Mammary epithelial cell (primary cell): ENCODE measurements at regions of chr9 and their contacts with region 1.

Region 1: GRCh38 chr9:763692-764524 is 77.6 kb upstream of the DMRT1 start:
- DNase-seq: peak; percentile 74
- H3K4me3 ChIP-seq: peak overlapping the region in 1 of 3 experiments; percentile 26
- H3K27ac ChIP-seq: no peak overlapping the region
- H3K4me1 ChIP-seq: peaks cover 7% of the 10 kb centered on the region
- H3K27me3 ChIP-seq: peaks cover 2% of the 10 kb centered on the region
- CTCF ChIP-seq: peak; percentile 98 to 99

Region 2: GRCh38 chr9:347667-348292 is 416.1 kb before region 1 on chr9:
- CTCF ChIA-PET with region 1: no interaction called
- dilution Hi-C with region 1: no loop called
- in situ Hi-C with region 1: no loop called
- intact Hi-C with region 1: loop called (anchors 1 kb)
- DNase-seq: peak; percentile 51
- H3K4me3 ChIP-seq: no peak overlapping the region
- H3K27ac ChIP-seq: no peak overlapping the region
- H3K4me1 ChIP-seq: peaks cover 7% of the 10 kb centered on the region
- H3K27me3 ChIP-seq: no peaks in the 10 kb centered on the region
- CTCF ChIP-seq: peak; percentile 87 to 98

Region 3: GRCh38 chr9:406886-407654 is 356.8 kb before region 1 on chr9:
- CTCF ChIA-PET with region 1: no interaction called
- dilution Hi-C with region 1: no loop called
- in situ Hi-C with region 1: no loop called
- intact Hi-C with region 1: loop called (anchors 5 kb)
- DNase-seq: no peak
- H3K4me3 ChIP-seq: no peak overlapping the region
- H3K27ac ChIP-seq: no peak overlapping the region
- H3K4me1 ChIP-seq: no peaks in the 10 kb centered on the region
- H3K27me3 ChIP-seq: no peaks in the 10 kb centered on the region
- CTCF ChIP-seq: peak in 1 of 2 donors; percentile 53

Region 4: GRCh38 chr9:650362-650761 is 113.5 kb before region 1 on chr9:
- CTCF ChIA-PET with region 1: no interaction called
- dilution Hi-C with region 1: no loop called
- in situ Hi-C with region 1: no loop called
- intact Hi-C with region 1: no loop called
- DNase-seq: no peak
- H3K4me3 ChIP-seq: no peak overlapping the region
- H3K27ac ChIP-seq: peak overlapping the region; percentile 6
- H3K4me1 ChIP-seq: peaks cover 26% of the 10 kb centered on the region
- H3K27me3 ChIP-seq: no peaks in the 10 kb centered on the region
- CTCF ChIP-seq: no peak

Region 5: DNA sequence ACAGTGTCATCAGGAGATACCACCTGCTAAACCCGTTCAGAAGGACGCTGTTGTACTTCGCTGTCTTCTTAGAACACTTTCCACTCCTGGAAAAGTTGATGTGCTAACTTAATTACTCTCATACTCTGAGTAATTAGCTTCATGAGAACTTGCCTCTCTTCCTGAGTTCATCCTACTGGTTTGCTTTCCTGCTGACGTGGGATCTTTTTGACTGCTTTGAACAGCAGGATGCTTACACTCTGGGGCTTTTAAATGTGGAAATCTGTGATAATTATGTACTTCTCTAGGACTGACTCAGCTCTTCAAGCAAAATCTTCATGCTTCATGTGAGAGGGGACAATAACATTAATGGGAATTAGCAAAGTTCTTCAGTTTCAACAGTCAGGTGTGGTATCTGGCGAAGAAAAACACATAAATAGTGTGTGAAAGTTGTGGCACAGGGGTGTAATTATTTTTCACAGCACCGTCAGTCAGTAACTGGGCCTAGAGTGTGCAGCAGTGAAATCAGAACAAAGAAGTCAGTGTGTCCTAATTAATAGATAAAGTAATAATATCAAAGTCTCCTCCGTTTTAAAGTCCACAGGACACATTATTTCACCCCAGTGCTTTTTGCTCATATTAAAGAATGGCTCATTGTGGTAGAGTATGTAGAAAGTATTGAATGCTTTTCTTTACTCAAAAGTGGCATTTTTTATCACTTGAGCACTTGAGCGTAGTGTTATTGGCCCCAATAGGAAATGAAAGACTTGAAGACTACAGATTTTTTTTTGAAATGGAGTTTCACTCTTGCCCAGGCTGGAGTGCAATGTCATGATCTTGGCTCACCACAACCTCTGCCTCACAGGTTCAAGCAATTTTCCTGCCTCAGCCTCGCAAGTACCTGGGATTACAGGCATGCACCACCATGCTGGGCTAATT is 63.3 kb before region 1 on chr9:
- CTCF ChIA-PET with region 1: no interaction called
- dilution Hi-C with region 1: loop called (anchors 5 kb)
- in situ Hi-C with region 1: no loop called
- intact Hi-C with region 1: no loop called
- DNase-seq: no peak
- H3K4me3 ChIP-seq: no peak overlapping the region
- H3K27ac ChIP-seq: no peak overlapping the region
- H3K4me1 ChIP-seq: peaks cover 33% of the 10 kb centered on the region
- H3K27me3 ChIP-seq: no peaks in the 10 kb centered on the region
- CTCF ChIP-seq: no peak

Region 6: GRCh38 chr9:806285-807156 is 42.6 kb after region 1 on chr9:
- CTCF ChIA-PET with region 1: no interaction called
- dilution Hi-C with region 1: no loop called
- in situ Hi-C with region 1: no loop called
- intact Hi-C with region 1: loop called (anchors 5 kb)
- DNase-seq: peak; percentile 24
- H3K4me3 ChIP-seq: no peak overlapping the region
- H3K27ac ChIP-seq: no peak overlapping the region
- H3K4me1 ChIP-seq: peaks cover 10% of the 10 kb centered on the region
- H3K27me3 ChIP-seq: no peaks in the 10 kb centered on the region
- CTCF ChIP-seq: peak; percentile 73 to 76